ENCODE measurements at regions of chr5 and their contacts with region 1.

Region 1: DNA sequence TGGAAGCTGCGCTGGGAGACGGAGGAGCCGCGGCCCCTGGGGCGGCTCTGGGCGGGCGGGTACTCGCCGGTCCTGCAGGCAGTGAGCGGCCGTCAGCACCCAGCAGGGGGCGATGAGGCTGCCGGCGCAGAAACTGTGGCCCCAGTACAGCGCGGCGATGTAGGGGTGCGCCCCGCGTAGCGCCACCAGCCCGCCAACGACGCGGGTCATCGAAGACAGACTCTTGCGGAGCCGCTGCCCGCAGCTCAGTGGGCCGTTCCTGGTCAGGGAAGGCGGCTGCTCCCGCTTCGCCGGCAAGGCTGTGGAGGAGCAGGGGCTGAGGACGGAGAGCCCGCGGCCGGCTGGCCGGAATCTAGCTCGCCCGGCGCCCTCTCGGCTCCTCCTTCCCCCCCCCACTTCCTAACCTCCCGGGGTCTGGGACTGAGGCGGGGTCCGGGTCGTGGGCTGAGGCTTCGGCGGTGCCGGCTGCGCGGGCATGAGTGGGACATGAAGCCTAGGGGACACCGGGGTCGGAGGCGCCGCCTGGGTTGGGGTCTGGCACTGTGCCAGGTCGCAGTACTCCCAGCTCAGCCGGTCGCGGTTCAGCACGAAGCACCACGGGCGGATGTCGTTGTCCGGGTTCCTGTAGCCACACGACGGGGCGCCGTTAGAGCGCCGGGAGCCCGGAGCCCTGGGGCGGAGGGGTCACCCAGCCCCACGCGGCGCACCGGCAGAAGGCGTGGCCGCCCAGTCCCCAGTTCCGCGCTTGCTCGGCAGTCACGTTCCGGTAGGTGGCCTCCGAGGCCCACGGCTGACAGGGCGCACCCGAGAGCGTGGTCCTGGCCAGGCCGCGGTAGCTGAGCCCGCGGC is 3.6 kb upstream of the PFN3 start:
- DNase-seq: peak; percentile 80 to 91 (median 85)
- ATAC-seq: peak; percentile 65 to 86 (median 74)
- H3K4me3 ChIP-seq: peak overlapping the region; percentile 34 to 42 (median 35)
- H3K27ac ChIP-seq: no peak overlapping the region
- H3K4me1 ChIP-seq: peaks cover 0 to 40% (median 4%) of the 10 kb centered on the region in 4 donors
- H3K27me3 ChIP-seq: no peaks in the 10 kb centered on the region
- CTCF ChIP-seq: peak; percentile 39 to 75 (median 48)
- POLR2A ChIP-seq: no peak

Region 2: DNA sequence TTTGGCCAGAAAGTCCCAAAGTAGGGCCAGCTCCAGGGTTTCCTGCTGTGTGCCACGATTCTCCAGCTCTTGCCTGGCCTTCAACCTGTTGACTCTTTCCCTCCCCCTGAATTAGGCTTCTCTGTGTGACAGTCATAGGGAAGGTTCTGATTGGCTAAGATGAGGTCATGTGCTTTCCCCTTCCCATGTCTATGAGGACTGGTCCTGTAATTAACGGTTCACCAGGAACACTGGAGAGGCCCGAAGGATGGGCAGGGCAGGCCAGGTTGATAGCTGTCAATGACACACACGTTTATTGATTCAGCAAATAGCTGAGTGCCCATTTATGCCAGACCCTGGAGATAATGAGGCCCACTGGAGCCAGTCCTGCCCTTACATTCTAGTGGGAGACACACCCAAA is 33.6 kb after region 1 on chr5:
- intact Hi-C with region 1: loop called in 1 of 2 experiments (anchors 5 kb)
- DNase-seq: no peak
- ATAC-seq: no peak
- H3K4me3 ChIP-seq: no peak overlapping the region
- H3K27ac ChIP-seq: no peak overlapping the region
- H3K4me1 ChIP-seq: no peaks in the 10 kb centered on the region
- H3K27me3 ChIP-seq: no peaks in the 10 kb centered on the region
- CTCF ChIP-seq: no peak
- POLR2A ChIP-seq: no peak

Measured in right lobe of liver (tissue), 6 donors.